CD14-positive monocyte (primary cell): ENCODE measurements at regions of chr2 and their contacts with region 1.

Region 1: GRCh38 chr2:182754231-182754630 is 38.2 kb downstream of the DNAJC10 start:
- DNase-seq: no peak
- H3K4me3 ChIP-seq: no peak overlapping the region
- H3K4me3 Mint-ChIP-seq: no peak overlapping the region
- H3K27ac ChIP-seq: no peak overlapping the region
- H3K27ac Mint-ChIP-seq: no peak overlapping the region
- H3K4me1 ChIP-seq: no peaks in the 10 kb centered on the region
- H3K4me1 Mint-ChIP-seq: no peaks in the 10 kb centered on the region
- H3K27me3 ChIP-seq: no peaks in the 10 kb centered on the region
- H3K27me3 Mint-ChIP-seq: peaks cover 0 to 2% (median 0%) of the 10 kb centered on the region in 3 donors
- CTCF ChIP-seq: no peak

Region 2: DNA sequence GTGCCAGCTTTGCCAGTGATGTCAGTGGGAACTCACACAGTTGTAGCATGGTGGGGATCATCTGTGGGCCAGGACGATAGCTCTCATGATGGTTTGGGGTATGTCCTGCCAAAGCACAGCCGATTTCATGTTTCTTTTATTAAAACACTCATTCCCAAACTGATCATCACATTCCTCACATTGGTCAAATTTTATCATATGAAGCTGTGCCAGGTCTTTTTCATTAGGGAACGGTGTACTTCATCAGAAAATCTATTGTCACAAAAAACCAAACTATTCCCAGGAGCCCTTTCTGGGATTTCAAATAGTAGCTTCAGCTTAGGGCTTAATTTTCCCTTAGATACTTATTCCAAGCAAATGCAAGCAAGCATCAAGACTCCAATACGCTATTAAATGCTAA is 1255.0 kb before region 1 on chr2:
- intact Hi-C with region 1: loop called in 1 of 2 experiments (anchors 10 kb)
- DNase-seq: no peak
- H3K4me3 ChIP-seq: no peak overlapping the region
- H3K4me3 Mint-ChIP-seq: no peak overlapping the region
- H3K27ac ChIP-seq: no peak overlapping the region
- H3K27ac Mint-ChIP-seq: no peak overlapping the region
- H3K4me1 ChIP-seq: no peaks in the 10 kb centered on the region
- H3K4me1 Mint-ChIP-seq: no peaks in the 10 kb centered on the region
- H3K27me3 ChIP-seq: no peaks in the 10 kb centered on the region
- H3K27me3 Mint-ChIP-seq: no peaks in the 10 kb centered on the region
- CTCF ChIP-seq: no peak

Region 3: GRCh38 chr2:181523756-181524155 is 1230.5 kb before region 1 on chr2:
- intact Hi-C with region 1: loop called in 1 of 2 experiments (anchors 10 kb)
- DNase-seq: no peak
- H3K4me3 ChIP-seq: no peak overlapping the region
- H3K4me3 Mint-ChIP-seq: no peak overlapping the region
- H3K27ac ChIP-seq: no peak overlapping the region
- H3K27ac Mint-ChIP-seq: peak overlapping the region in 1 of 7 donors; percentile 0
- H3K4me1 ChIP-seq: no peaks in the 10 kb centered on the region
- H3K4me1 Mint-ChIP-seq: no peaks in the 10 kb centered on the region
- H3K27me3 ChIP-seq: no peaks in the 10 kb centered on the region
- H3K27me3 Mint-ChIP-seq: no peaks in the 10 kb centered on the region
- CTCF ChIP-seq: no peak

Region 4: GRCh38 chr2:182581196-182581935 is 172.9 kb before region 1 on chr2:
- intact Hi-C with region 1: no loop called
- DNase-seq: no peak
- H3K4me3 ChIP-seq: no peak overlapping the region
- H3K4me3 Mint-ChIP-seq: no peak overlapping the region
- H3K27ac ChIP-seq: no peak overlapping the region
- H3K27ac Mint-ChIP-seq: no peak overlapping the region
- H3K4me1 ChIP-seq: no peaks in the 10 kb centered on the region
- H3K4me1 Mint-ChIP-seq: peaks cover 2% of the 10 kb centered on the region
- H3K27me3 ChIP-seq: no peaks in the 10 kb centered on the region
- H3K27me3 Mint-ChIP-seq: peaks cover 0 to 1% (median 0%) of the 10 kb centered on the region in 3 donors
- CTCF ChIP-seq: no peak

Region 5: GRCh38 chr2:182650704-182651103 is 103.5 kb before region 1 on chr2:
- intact Hi-C with region 1: no loop called
- DNase-seq: peak in 1 of 3 donors; percentile 23
- H3K4me3 ChIP-seq: no peak overlapping the region
- H3K4me3 Mint-ChIP-seq: peak overlapping the region in 1 of 2 donors; percentile 37
- H3K27ac ChIP-seq: no peak overlapping the region
- H3K27ac Mint-ChIP-seq: no peak overlapping the region
- H3K4me1 ChIP-seq: no peaks in the 10 kb centered on the region
- H3K4me1 Mint-ChIP-seq: peaks cover 4% of the 10 kb centered on the region
- H3K27me3 ChIP-seq: no peaks in the 10 kb centered on the region
- H3K27me3 Mint-ChIP-seq: peaks cover 0 to 3% (median 0%) of the 10 kb centered on the region in 3 donors
- CTCF ChIP-seq: peak; percentile 69